Activated T-helper 2 cell treated with anti-CD3 and anti-CD28 coated beads, Interferon-gamma antibody, Interleukin-2, Interleukin-4, amounts not matched to agents 10 μg/mL and 5 μg/mL and 100 μg/mL, durations not matched to agents 14 hours and 24 hours and 36 hours (primary cell): ENCODE measurements at regions of chr9 and their contacts with region 1.

Region 1: GRCh38 chr9:127244609-127245601 is 19.7 kb upstream of the GARNL3 start:
- DNase-seq: peak; percentile 92
- H3K4me3 Mint-ChIP-seq: peak overlapping the region; percentile 79
- H3K27ac Mint-ChIP-seq: peak overlapping the region; percentile 25
- H3K4me1 Mint-ChIP-seq: peaks cover 5% of the 10 kb centered on the region
- H3K27me3 Mint-ChIP-seq: peaks cover 7% of the 10 kb centered on the region

Region 2: GRCh38 chr9:126347911-126348760 is 896.8 kb before region 1 on chr9:
- intact Hi-C with region 1: no loop called
- DNase-seq: no peak
- H3K4me3 Mint-ChIP-seq: no peak overlapping the region
- H3K27ac Mint-ChIP-seq: no peak overlapping the region
- H3K4me1 Mint-ChIP-seq: no peaks in the 10 kb centered on the region
- H3K27me3 Mint-ChIP-seq: peaks cover 36% of the 10 kb centered on the region

Region 3: GRCh38 chr9:126956917-126957686 is 287.8 kb before region 1 on chr9:
- intact Hi-C with region 1: no loop called
- DNase-seq: no peak
- H3K4me3 Mint-ChIP-seq: no peak overlapping the region
- H3K27ac Mint-ChIP-seq: no peak overlapping the region
- H3K4me1 Mint-ChIP-seq: no peaks in the 10 kb centered on the region
- H3K27me3 Mint-ChIP-seq: peaks cover 38% of the 10 kb centered on the region

Region 4: DNA sequence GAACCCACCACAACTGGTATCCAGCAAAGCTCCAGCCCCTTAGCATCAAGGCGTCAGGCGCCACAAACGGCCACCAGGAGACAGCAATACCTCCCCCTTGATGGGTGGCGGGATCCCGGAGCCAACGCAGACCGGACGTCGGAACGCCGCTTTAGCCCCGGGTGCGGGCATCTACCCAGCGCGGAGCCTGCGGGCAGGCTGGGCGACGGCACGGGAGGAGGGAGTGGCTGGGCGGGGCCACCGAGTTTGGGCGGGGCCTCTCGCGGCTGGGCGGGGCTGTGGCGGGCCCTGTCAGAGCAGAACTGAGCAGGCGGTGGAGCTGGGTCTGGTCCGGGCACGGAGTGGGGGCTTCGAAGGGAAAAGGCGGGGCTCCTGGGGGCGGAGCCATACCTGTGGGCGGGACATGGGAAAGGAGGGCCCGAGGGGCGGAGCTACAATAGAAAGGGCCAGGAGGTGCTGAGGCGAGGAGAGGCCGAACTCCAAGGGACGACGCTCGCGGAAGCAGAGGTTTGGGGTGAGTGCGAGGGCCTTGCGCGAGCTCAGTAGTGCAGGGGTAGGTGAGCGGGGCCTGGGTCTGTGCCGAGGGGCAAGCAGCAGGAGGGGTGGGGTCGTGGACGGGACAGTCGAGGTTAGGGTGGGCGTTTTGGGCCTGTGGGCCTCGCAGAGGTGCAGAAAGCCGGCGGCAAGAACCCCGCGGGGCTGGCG is 20.6 kb before region 1 on chr9:
- intact Hi-C with region 1: loop called (anchors 1 kb)
- DNase-seq: peak; percentile 83
- H3K4me3 Mint-ChIP-seq: peak overlapping the region; percentile 74
- H3K27ac Mint-ChIP-seq: peak overlapping the region; percentile 56
- H3K4me1 Mint-ChIP-seq: peaks cover 19% of the 10 kb centered on the region
- H3K27me3 Mint-ChIP-seq: peaks cover 48% of the 10 kb centered on the region